ENCODE measurements at regions of chrX and their contacts with region 1.

Region 1: GRCh38 chrX:152941328-152942106 is 43.6 kb downstream of the ZNF185 start:
- DNase-seq: peak; percentile 92
- H3K4me3 Mint-ChIP-seq: peak overlapping the region; percentile 82
- H3K27ac Mint-ChIP-seq: peak overlapping the region; percentile 65
- H3K4me1 Mint-ChIP-seq: peaks cover 12% of the 10 kb centered on the region
- H3K27me3 Mint-ChIP-seq: no peaks in the 10 kb centered on the region

Region 2: GRCh38 chrX:152958524-152959465 is 17.3 kb after region 1 on chrX:
- CTCF ChIA-PET with region 1: interaction called, 23 read pairs
- POLR2A ChIA-PET with region 1: interaction called, 5 read pairs
- DNase-seq: peak; percentile 91
- H3K4me3 Mint-ChIP-seq: peak overlapping the region; percentile 53
- H3K27ac Mint-ChIP-seq: peak overlapping the region; percentile 78
- H3K4me1 Mint-ChIP-seq: peaks cover 17% of the 10 kb centered on the region
- H3K27me3 Mint-ChIP-seq: no peaks in the 10 kb centered on the region

Region 3: DNA sequence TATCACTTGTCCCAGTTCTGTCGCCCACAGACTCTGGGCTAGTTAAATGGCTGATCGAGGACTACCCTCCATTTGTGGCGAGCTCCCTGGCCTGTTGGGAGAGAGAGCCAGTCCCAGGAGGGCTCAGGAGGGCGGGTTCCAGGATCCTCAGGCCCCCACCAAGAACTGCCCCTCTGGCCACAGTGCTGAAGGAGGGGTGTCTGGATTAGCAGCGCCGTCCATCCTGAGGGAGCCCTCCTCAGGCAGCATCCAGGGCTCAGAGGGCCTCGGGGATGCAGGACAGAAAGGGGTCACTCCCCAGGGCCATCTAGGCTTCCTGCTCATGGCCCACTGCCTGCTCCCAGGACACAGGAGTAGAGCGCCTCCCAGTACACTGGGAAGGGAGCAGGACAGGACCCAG is 46.3 kb after region 1 on chrX:
- CTCF ChIA-PET with region 1: no interaction called
- POLR2A ChIA-PET with region 1: no interaction called
- DNase-seq: no peak
- H3K4me3 Mint-ChIP-seq: no peak overlapping the region
- H3K27ac Mint-ChIP-seq: no peak overlapping the region
- H3K4me1 Mint-ChIP-seq: peaks cover 40% of the 10 kb centered on the region
- H3K27me3 Mint-ChIP-seq: no peaks in the 10 kb centered on the region

Region 4: DNA sequence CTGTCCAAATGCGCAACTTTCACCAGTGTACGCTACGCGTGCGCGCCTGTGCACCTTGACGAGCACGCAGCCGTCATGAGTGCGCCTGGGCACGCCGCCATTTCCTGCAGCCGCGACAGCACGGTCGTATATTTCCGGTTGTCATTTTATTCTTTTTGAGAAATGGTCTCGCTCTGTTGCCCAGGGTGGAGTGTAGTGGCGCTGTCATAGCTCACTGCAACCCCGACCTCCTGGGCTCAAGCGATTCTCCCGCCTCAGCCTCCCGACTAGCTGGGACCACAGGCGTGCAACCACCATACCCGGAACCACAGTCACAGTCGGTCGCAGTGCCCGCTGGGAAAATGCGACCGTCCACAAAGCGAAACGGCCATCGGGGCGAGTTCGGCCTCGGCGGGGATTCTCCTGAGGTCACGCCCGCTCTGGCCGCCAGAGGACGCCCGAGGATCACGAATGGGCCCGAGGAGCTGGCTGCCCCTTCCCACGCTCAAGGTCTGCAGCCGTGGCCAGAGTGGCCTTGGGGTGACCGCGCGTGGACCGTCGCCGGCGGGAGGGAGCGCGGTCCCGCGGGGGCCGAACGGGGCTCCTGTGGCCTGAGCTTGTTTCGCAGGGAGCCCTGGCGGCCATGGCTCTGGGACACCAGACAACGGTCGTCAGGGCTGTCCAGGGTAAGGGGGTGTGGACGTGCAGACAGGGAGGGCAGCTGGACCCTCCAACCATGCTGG is 91.0 kb after region 1 on chrX:
- CTCF ChIA-PET with region 1: interaction called, 12 read pairs
- POLR2A ChIA-PET with region 1: interaction called, 4 read pairs
- DNase-seq: peak; percentile 74
- H3K4me3 Mint-ChIP-seq: peak overlapping the region; percentile 81
- H3K27ac Mint-ChIP-seq: peak overlapping the region; percentile 91
- H3K4me1 Mint-ChIP-seq: peaks cover 24% of the 10 kb centered on the region
- H3K27me3 Mint-ChIP-seq: no peaks in the 10 kb centered on the region

Region 5: DNA sequence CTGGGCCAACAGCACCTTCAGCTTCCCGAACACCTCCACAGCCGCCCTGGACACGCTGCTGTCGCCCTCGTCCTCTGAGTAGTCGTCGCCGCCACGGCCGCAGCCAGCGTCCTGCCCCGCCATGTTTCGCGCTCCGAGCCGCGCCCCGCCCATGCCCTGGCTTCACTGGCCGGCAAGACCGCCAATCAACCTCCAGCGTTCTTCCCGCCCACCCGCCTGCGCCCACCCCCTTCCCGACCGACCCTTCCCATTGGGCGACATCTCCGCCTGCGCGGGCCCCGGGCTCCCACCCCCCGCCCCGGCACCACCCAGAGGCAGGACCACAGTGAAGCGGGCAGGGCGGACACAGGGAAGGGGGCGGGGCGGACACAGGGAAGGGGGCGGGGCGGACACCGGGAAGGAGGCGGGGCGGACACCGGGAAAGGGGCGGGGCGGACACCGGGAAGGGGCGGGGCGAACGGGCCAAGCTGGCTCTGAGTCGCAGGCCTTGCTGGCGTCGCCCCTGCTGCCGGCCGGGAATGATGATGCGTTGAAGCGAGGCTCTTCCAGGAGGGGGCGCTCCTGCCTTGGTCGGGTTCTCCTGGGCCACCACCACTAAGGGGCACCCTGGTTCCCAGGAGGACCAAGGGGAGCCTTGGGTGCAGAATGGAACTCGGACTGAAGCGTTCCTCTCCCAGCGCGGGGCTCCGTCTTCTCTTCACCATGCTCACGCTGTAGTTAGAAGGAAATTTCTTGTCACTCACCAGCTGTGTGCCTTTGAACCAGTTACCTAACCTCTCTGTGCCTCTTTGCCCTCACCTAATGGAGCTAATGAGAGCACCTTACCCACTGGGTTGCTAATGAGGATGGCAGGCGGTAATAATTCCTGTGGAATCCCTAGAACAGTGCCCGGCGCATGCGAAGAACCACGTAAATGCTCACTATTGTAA is 529.2 kb after region 1 on chrX and contains the start of gene HAUS7:
- CTCF ChIA-PET with region 1: interaction called, 12 read pairs
- POLR2A ChIA-PET with region 1: no interaction called
- DNase-seq: peak; percentile 87
- H3K4me3 Mint-ChIP-seq: peak within 1 kb of the TSS; percentile 79
- H3K27ac Mint-ChIP-seq: peak within 1 kb of the TSS; percentile 72
- H3K4me1 Mint-ChIP-seq: peaks cover 20% of the 10 kb centered on the region
- H3K27me3 Mint-ChIP-seq: peaks cover 4% of the 10 kb centered on the region
- total RNA-seq, gene HAUS7: 33.8 to 40.5 TPM

Region 6: DNA sequence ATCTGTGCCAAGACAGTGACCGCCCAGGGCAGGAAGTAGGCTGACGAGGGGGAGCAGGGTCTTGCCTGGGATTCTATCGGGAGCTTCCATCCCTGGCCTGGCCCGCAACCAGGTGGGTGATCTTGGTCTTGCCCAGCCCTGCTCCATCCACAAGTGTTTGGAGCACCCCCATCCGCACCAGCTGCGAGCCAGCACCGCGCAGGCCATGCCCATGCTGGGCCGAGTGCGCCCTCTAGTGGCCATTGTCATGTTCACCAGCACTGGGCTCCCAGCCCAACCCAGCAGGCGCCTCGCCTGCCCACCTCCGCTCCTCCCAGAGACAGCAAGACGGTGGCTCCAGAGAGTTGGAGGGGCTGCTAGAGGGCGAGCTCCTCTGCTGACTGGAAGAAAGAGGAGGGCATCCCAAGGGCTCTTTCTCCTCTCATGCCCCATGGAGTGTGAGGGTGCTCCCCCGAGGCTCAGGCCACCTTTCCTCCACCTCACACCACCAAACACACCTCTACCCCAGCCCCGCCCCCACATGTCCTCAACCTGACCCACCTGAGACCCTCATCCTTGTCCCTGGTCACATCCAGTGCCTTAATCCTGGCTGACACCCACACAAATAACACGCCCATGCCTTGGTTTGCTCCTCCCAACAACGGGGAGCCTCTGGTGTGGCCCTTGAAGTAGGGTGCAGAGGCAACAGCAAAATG is 566.1 kb after region 1 on chrX:
- CTCF ChIA-PET with region 1: interaction called, 20 read pairs
- POLR2A ChIA-PET with region 1: interaction called, 3 read pairs
- DNase-seq: peak; percentile 82
- H3K4me3 Mint-ChIP-seq: no peak overlapping the region
- H3K27ac Mint-ChIP-seq: no peak overlapping the region
- H3K4me1 Mint-ChIP-seq: peaks cover 1% of the 10 kb centered on the region
- H3K27me3 Mint-ChIP-seq: no peaks in the 10 kb centered on the region

Region 7: GRCh38 chrX:153667956-153668396 is 726.5 kb after region 1 on chrX:
- CTCF ChIA-PET with region 1: interaction called, 17 read pairs
- POLR2A ChIA-PET with region 1: no interaction called
- DNase-seq: peak; percentile 81
- H3K4me3 Mint-ChIP-seq: peak overlapping the region; percentile 65
- H3K27ac Mint-ChIP-seq: no peak overlapping the region
- H3K4me1 Mint-ChIP-seq: peaks cover 7% of the 10 kb centered on the region
- H3K27me3 Mint-ChIP-seq: peaks cover 20% of the 10 kb centered on the region